Naive thymus-derived CD4-positive, alpha-beta T cell (primary cell): ENCODE measurements at regions of chr2 and their contacts with region 1.

Region 1: GRCh38 chr2:20650880-20651730 is at the start of gene HS1BP3:
- DNase-seq: peak; percentile 87 to 99 (median 94)
- ATAC-seq: peak; percentile 97
- H3K4me3 ChIP-seq: peak within 1 kb of the TSS; percentile 80
- H3K4me3 Mint-ChIP-seq: peak within 1 kb of the TSS; percentile 86 to 95 (median 90)
- H3K27ac ChIP-seq: peak within 1 kb of the TSS; percentile 86
- H3K27ac Mint-ChIP-seq: peak within 1 kb of the TSS; percentile 90 to 99 (median 96)
- H3K4me1 ChIP-seq: peaks cover 16 to 20% of the 10 kb centered on the region in 2 donors
- H3K4me1 Mint-ChIP-seq: peaks cover 22 to 42% (median 39%) of the 10 kb centered on the region in 7 donors
- H3K27me3 ChIP-seq: no peaks in the 10 kb centered on the region
- H3K27me3 Mint-ChIP-seq: peaks cover 0 to 11% (median 0%) of the 10 kb centered on the region in 5 donors
- total RNA-seq, gene HS1BP3: 12.0 to 19.0 (median 18.3) TPM

Region 2: GRCh38 chr2:19868705-19869580 is 782.2 kb before region 1 on chr2:
- CTCF ChIA-PET with region 1: no interaction called
- POLR2A ChIA-PET with region 1: no interaction called
- intact Hi-C with region 1: loop called in 1 of 2 experiments (anchors 5 kb)
- DNase-seq: peak; percentile 41 to 79 (median 74)
- ATAC-seq: peak; percentile 91
- H3K4me3 ChIP-seq: peak overlapping the region; percentile 74
- H3K4me3 Mint-ChIP-seq: peak overlapping the region; percentile 94 to 98 (median 97)
- H3K27ac ChIP-seq: peak overlapping the region; percentile 76
- H3K27ac Mint-ChIP-seq: peak overlapping the region; percentile 95 to 98 (median 96)
- H3K4me1 ChIP-seq: peaks cover 12 to 19% of the 10 kb centered on the region in 2 donors
- H3K4me1 Mint-ChIP-seq: peaks cover 25 to 48% (median 34%) of the 10 kb centered on the region in 7 donors
- H3K27me3 ChIP-seq: no peaks in the 10 kb centered on the region
- H3K27me3 Mint-ChIP-seq: peaks cover 0 to 7% (median 0%) of the 10 kb centered on the region in 5 donors

Region 3: DNA sequence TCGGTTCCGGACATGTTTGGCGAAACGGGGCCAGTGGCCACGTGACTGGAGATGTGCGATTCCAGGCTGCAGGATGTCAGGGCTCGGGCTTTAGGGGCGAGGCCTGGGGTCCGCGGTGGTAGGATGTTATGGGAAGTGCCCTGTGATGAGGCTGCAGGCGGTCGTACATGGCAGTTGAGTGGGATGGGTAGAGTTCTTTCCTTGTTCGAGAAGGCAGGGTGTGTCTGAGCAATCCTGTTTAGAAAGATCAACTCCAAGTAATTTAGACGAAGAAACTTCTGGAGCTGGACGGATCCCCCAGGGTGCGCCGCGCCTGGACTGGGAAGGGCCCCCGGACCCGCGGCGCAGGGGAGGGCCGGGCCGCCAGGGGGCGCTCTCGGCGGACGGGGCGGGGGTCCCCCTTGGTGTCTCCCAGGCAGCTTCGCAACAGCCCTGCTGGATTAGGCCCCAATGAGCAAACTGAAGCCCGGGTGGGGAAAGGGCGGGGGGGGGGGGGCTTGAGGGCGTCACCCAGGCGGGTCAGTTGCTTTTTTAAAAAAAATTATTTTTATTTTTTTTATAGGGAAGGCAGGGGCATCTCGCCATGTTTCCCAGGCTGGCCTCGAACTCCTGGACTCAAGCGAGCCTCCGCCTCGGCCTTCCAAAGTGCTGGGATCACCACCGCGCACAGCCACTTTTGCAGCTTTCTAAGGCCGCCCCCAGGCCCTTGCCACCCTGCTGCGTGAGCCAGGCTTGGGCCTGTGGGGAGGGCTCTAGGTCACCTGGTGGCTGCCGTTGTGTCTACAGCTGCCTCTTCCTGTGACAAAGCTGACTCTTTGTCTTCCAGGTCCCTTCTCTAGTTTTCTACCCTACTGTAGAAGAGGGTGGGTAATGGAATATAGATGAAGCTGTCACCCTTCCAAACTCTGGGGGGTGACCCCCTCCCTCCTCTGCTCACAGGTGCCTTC is 408.8 kb before region 1 on chr2:
- CTCF ChIA-PET with region 1: no interaction called
- POLR2A ChIA-PET with region 1: no interaction called
- intact Hi-C with region 1: loop called in 1 of 2 experiments (anchors 10 kb)
- DNase-seq: peak in 1 of 9 donors; percentile 63
- ATAC-seq: peak; percentile 38
- H3K4me3 ChIP-seq: peak overlapping the region; percentile 28
- H3K4me3 Mint-ChIP-seq: peak overlapping the region; percentile 41 to 83 (median 63)
- H3K27ac ChIP-seq: no peak overlapping the region
- H3K27ac Mint-ChIP-seq: peak overlapping the region in 7 of 9 donors; percentile 34 to 78 (median 58)
- H3K4me1 ChIP-seq: no peaks in the 10 kb centered on the region
- H3K4me1 Mint-ChIP-seq: peaks cover 3 to 17% (median 9%) of the 10 kb centered on the region in 7 donors
- H3K27me3 ChIP-seq: no peaks in the 10 kb centered on the region
- H3K27me3 Mint-ChIP-seq: peaks cover 0 to 15% (median 6%) of the 10 kb centered on the region in 5 donors

Region 4: DNA sequence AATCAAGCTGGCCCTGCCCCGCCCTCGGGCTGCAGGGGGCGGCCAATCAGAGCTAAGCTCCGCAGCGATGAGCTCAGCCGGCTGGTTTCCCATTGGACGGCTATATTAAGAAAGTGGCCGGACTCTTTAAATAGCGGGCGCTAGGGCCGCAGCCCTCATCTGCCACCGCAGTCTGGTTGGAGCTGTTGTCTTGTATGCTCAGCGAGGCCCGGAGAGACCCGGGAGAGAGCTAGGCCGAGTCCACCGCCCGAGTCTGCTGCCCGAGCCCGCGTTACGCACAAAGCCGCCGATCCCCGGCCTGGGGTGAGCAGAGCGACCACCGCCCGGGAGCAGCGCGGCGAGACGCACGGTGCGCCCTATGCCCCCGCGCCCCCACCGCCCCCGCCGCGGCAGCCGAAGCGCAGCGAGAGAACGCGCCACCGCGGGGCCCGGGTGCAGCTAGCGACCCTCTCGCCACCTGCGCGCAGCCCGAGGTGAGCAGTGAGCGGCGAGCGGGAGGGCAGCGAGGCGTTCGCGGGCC is 204.1 kb before region 1 on chr2 and contains the start of gene RHOB:
- CTCF ChIA-PET with region 1: interaction called, 19 read pairs
- POLR2A ChIA-PET with region 1: interaction called, 41 read pairs
- intact Hi-C with region 1: loop called (anchors 1 kb)
- DNase-seq: peak; percentile 75 to 90 (median 82)
- ATAC-seq: peak; percentile 97
- H3K4me3 ChIP-seq: peak within 1 kb of the TSS; percentile 71
- H3K4me3 Mint-ChIP-seq: peak within 1 kb of the TSS; percentile 77 to 88 (median 81)
- H3K27ac ChIP-seq: peak within 1 kb of the TSS; percentile 59
- H3K27ac Mint-ChIP-seq: peak within 1 kb of the TSS in 5 of 9 donors; percentile 11 to 81 (median 51)
- H3K4me1 ChIP-seq: peaks cover 6 to 12% of the 10 kb centered on the region in 2 donors
- H3K4me1 Mint-ChIP-seq: peaks cover 0 to 7% (median 4%) of the 10 kb centered on the region in 7 donors
- H3K27me3 ChIP-seq: peaks cover 0 to 3% of the 10 kb centered on the region in 2 donors
- H3K27me3 Mint-ChIP-seq: peaks cover 0 to 68% (median 13%) of the 10 kb centered on the region in 5 donors
- total RNA-seq, gene RHOB: 2.5 to 244 (median 11.7) TPM

Region 5: DNA sequence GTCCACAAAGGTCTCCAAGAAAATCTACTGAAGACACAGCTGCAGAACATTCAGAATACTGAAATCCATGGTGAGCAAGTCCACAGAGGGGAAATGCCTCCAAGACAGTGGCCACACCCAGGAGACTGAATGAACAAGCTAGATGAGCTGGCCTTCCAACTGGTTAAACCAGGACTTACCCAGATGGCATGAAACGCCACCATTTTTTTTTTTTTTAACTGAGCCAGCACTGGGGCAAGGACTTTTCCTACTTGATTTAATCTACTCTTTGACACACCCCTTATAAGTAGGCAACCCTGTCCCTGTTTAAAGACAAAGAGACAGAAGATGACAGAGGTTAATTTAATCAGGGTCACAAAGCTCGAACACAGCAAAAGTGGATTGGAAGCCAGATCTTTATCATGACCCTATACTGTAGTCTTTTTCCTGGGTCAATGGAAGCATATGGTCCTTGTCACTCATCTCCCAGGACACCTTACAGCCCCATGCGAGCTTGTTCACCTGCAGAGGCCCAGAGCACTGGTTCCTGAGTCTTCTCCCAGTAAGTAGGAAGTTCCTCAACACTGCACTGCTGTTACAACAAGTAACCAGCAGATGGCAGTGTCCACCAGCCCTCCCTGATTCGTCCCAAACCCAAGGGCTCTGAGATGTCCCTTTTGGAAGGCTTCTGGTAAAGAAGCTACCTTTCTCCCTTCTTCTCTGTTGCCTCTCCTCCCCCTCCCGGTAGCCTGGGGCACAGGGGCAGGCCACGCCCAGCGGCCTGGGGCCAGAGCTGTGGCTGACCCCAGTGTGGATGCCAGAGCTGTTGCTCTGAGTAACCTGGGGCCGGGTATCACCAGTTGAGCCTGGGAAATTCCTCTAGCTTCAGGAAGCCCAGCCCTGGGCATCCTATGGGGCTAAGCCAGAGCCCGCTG is 10.2 kb after region 1 on chr2:
- CTCF ChIA-PET with region 1: interaction called, 37 read pairs
- POLR2A ChIA-PET with region 1: no interaction called
- intact Hi-C with region 1: loop called in 1 of 2 experiments (anchors 2 kb)
- DNase-seq: peak in 8 of 9 donors; percentile 35 to 71 (median 62)
- ATAC-seq: peak; percentile 88
- H3K4me3 ChIP-seq: no peak overlapping the region
- H3K4me3 Mint-ChIP-seq: no peak overlapping the region
- H3K27ac ChIP-seq: no peak overlapping the region
- H3K27ac Mint-ChIP-seq: no peak overlapping the region
- H3K4me1 ChIP-seq: no peaks in the 10 kb centered on the region
- H3K4me1 Mint-ChIP-seq: peaks cover 2 to 15% (median 7%) of the 10 kb centered on the region in 7 donors
- H3K27me3 ChIP-seq: peaks cover 5 to 7% of the 10 kb centered on the region in 2 donors
- H3K27me3 Mint-ChIP-seq: peaks cover 52 to 80% (median 59%) of the 10 kb centered on the region in 5 donors

Region 6: GRCh38 chr2:20822535-20823490 is 171.7 kb after region 1 on chr2 and contains the start of gene LDAH:
- CTCF ChIA-PET with region 1: no interaction called
- POLR2A ChIA-PET with region 1: interaction called, 18 read pairs
- intact Hi-C with region 1: loop called (anchors 1 kb)
- DNase-seq: peak; percentile 71 to 84 (median 81)
- ATAC-seq: peak; percentile 91
- H3K4me3 ChIP-seq: peak within 1 kb of the TSS; percentile 98
- H3K4me3 Mint-ChIP-seq: peak within 1 kb of the TSS; percentile 93 to 99 (median 97)
- H3K27ac ChIP-seq: peak within 1 kb of the TSS; percentile 86
- H3K27ac Mint-ChIP-seq: peak within 1 kb of the TSS; percentile 95 to 99 (median 98)
- H3K4me1 ChIP-seq: no peaks in the 10 kb centered on the region
- H3K4me1 Mint-ChIP-seq: peaks cover 7 to 45% (median 25%) of the 10 kb centered on the region in 7 donors
- H3K27me3 ChIP-seq: no peaks in the 10 kb centered on the region
- H3K27me3 Mint-ChIP-seq: peaks cover 0 to 2% (median 0%) of the 10 kb centered on the region in 5 donors
- total RNA-seq, gene LDAH: 11.1 to 29.8 (median 18.4) TPM

Region 7: DNA sequence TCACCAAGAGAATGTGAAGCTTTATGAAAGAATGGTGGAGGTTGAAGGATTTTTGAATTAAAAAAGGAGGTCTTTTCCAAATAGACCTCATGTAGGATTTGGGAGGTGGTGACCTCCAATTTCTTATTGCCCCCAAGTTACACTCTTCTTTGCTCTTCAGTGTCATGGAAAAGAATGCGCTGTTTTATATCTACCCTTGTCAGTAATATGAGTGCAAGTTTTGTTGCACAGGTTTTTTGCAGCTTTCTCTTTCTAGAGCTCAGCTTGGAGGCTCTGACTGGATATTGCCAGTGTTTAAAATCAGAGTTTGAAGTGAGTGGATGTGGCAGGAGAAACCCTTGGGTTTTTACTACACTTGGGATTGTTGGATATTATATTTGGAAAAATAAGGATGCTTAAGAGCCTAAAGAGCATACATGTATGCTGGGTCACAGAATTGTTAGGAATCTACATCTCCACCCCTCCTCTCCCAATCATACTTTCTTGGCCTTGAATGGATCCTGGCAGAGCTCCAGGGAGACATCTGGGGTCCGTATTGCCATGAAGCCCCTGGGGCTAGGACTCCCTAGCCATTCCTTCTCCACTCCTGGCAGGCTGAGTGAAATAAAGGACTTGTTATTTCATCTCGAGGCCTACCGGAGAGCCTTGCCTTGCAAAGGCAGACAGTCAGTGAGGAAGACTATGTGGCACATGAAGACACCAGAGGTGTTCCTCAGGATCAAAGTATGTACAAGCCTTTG is 349.0 kb after region 1 on chr2:
- CTCF ChIA-PET with region 1: no interaction called
- POLR2A ChIA-PET with region 1: no interaction called
- intact Hi-C with region 1: no loop called
- DNase-seq: no peak
- ATAC-seq: no peak
- H3K4me3 ChIP-seq: no peak overlapping the region
- H3K4me3 Mint-ChIP-seq: no peak overlapping the region
- H3K27ac ChIP-seq: no peak overlapping the region
- H3K27ac Mint-ChIP-seq: no peak overlapping the region
- H3K4me1 ChIP-seq: no peaks in the 10 kb centered on the region
- H3K4me1 Mint-ChIP-seq: no peaks in the 10 kb centered on the region
- H3K27me3 ChIP-seq: no peaks in the 10 kb centered on the region
- H3K27me3 Mint-ChIP-seq: peaks cover 0 to 14% (median 3%) of the 10 kb centered on the region in 5 donors